Natural killer cell (primary cell): ENCODE measurements at regions of chr3 and their contacts with region 1.

Region 1: GRCh38 chr3:46378426-46378942 is 7.7 kb downstream of the CCR5 start:
- DNase-seq: peak; percentile 47 to 76
- ATAC-seq: peak in 2 of 3 donors; percentile 69 to 70
- H3K4me3 ChIP-seq: no peak overlapping the region
- H3K4me3 Mint-ChIP-seq: no peak overlapping the region
- H3K27ac ChIP-seq: no peak overlapping the region
- H3K27ac Mint-ChIP-seq: no peak overlapping the region
- H3K4me1 ChIP-seq: peaks cover 49% of the 10 kb centered on the region
- H3K4me1 Mint-ChIP-seq: peaks cover 40 to 41% of the 10 kb centered on the region in 2 donors
- H3K27me3 ChIP-seq: no peaks in the 10 kb centered on the region
- H3K27me3 Mint-ChIP-seq: peaks cover 6 to 9% of the 10 kb centered on the region in 2 donors
- CTCF ChIP-seq: peak; percentile 74

Region 2: DNA sequence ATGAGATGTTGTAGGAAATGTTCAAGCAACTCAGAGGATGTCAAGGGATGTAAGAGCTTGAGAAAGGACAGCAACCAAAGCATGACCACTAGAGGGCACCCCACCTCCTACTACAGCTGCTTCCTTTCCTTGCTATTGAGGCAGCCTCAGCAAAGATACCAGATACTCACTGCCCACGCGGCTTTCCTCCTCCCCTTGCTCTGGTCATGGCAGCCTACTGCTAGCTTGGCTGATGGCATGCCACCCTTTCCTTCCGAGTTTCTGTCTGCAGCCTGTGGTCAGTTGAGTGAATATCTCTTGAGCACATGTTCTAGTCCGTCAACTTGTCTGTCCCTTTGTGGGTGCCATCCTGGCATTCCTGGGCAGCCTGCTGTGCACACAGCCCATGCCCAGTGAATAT is 439.6 kb before region 1 on chr3:
- intact Hi-C with region 1: loop called (anchors 2 kb)
- DNase-seq: peak; percentile 74 to 95
- ATAC-seq: peak; percentile 90 to 92 (median 91)
- H3K4me3 ChIP-seq: no peak overlapping the region
- H3K4me3 Mint-ChIP-seq: no peak overlapping the region
- H3K27ac ChIP-seq: no peak overlapping the region
- H3K27ac Mint-ChIP-seq: no peak overlapping the region
- H3K4me1 ChIP-seq: peaks cover 38% of the 10 kb centered on the region
- H3K4me1 Mint-ChIP-seq: peaks cover 7 to 31% of the 10 kb centered on the region in 2 donors
- H3K27me3 ChIP-seq: no peaks in the 10 kb centered on the region
- H3K27me3 Mint-ChIP-seq: no peaks in the 10 kb centered on the region
- CTCF ChIP-seq: peak; percentile 81

Region 3: DNA sequence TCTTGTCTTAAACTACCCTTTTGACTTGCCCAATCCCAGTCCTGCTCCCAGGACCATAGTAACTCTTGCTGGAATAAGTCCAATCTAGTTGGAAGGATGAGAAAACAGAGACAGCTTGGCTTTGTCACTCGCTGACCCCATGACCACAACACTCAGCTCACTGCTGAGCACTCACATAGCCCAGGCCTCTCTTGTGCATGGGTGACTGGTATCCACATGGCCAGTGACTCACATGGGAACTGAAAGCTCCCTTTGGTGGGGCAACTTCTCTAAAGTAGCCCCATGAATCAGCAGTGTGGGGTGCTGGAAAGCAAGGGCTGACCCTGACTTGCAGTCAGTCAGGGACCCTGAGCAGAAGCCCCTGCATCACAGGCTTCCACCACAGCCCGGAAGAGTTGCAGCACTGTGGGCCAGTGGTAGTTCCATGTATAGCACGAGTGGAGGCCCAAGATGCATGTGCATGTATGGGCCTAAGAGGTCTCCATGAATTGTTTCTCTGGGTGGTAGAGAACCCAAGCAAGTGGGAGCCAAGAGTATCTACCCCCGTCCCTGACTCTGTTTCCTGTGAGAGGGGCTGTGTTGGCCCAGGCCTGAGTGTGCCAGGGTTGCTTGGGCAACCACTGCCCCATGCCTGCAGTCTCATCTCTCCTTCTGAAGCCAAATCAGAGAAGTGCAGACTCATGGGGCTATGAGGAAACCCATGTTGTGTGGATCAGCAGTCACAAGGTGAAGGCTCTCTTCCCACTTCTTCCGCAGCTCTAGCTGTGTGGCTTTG is 289.1 kb before region 1 on chr3:
- intact Hi-C with region 1: loop called (anchors 5 kb)
- DNase-seq: peak in 1 of 2 donors; percentile 27
- ATAC-seq: peak; percentile 35 to 89 (median 48)
- H3K4me3 ChIP-seq: no peak overlapping the region
- H3K4me3 Mint-ChIP-seq: no peak overlapping the region
- H3K27ac ChIP-seq: peak overlapping the region; percentile 57
- H3K27ac Mint-ChIP-seq: peak overlapping the region in 1 of 2 donors; percentile 69
- H3K4me1 ChIP-seq: peaks cover 57% of the 10 kb centered on the region
- H3K4me1 Mint-ChIP-seq: peaks cover 31 to 37% of the 10 kb centered on the region in 2 donors
- H3K27me3 ChIP-seq: no peaks in the 10 kb centered on the region
- H3K27me3 Mint-ChIP-seq: peaks cover 0 to 2% of the 10 kb centered on the region in 2 donors
- CTCF ChIP-seq: no peak